Lower leg skin (tissue), 4 donors: ENCODE measurements at regions of chr11 and their contacts with region 1.

Region 1: GRCh38 chr11:39975091-39975490 is 1484.4 kb downstream of the LRRC4C start:
- DNase-seq: no peak
- H3K4me3 ChIP-seq: no peak overlapping the region
- CTCF ChIP-seq: no peak
- POLR2A ChIP-seq: no peak

Region 2: DNA sequence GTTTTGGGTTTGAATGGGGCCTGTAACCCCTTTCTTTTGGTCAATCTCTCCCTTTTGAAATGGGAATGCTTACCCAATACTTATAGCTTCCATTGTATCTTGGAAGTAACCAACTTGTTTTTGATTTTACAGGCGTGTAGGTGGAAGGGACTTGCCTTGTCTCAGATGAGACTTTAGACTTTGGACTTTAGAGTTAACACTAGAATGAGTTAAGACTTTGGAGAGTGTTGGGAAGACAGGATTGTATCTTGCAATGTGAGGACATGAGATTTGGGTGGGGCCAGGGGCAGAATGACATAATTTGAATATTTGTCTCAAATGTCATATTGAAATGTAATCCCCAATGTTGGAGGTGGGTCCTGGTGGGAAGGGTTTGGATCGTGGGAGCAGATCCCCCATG is 17.5 kb after region 1 on chr11:
- intact Hi-C with region 1: loop called (anchors 2 kb)
- DNase-seq: no peak
- H3K4me3 ChIP-seq: no peak overlapping the region
- CTCF ChIP-seq: no peak
- POLR2A ChIP-seq: no peak